ENCODE measurements at regions of chr7 and their contacts with region 1.

Region 1: DNA sequence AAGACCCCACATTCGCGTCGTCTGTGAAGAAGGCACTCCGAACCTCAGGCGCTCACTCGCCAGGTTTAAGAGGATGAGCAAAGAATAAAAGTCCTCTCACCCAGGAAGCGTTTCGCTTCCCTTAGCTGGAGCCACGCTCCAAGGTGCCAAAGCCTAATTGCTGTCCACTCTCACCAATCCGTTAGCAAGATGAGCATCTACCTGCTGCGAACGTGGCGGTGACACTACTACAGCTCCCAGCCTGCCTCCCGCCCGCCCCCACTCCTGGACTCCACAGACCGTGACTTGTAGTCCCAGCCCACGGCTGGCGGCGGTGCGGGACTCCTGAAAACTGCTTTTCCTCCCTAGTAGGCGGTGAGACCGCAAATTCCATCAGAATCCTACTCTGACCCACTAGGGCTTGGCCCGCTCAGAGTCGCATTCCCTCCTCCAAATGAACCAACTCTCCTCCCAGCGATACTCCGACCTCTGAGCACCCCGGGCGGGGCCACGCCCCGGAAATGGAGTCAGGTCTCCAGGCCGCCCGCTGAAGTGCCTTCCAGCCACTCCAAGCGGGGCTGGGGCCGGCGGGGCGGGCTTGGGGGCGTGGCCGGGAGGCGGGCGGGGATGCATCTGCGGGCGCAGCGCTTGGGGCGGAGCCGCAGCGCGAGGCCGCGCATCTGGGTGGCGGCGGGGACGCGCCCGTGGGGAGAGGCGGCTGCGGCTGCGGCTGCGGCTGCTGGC is 521 bp upstream of the PTPN12 start:
- DNase-seq: peak; percentile 98 to 99 (median 99)
- ATAC-seq: peak; percentile 92 to 97 (median 94)
- H3K4me3 ChIP-seq: peak overlapping the region; percentile 75 to 100 (median 97)
- H3K27ac ChIP-seq: peak overlapping the region; percentile 98 to 100 (median 98)
- H3K4me1 ChIP-seq: peaks cover 5 to 36% (median 24%) of the 10 kb centered on the region in 12 donors
- H3K27me3 ChIP-seq: no peaks in the 10 kb centered on the region
- CTCF ChIP-seq: no peak
- POLR2A ChIP-seq: peak; percentile 96 to 99

Region 2: GRCh38 chr7:77415823-77416622 is 120.6 kb before region 1 on chr7 and contains the start of gene GSAP:
- intact Hi-C with region 1: loop called in 5 of 10 experiments (anchors 5 to 10 kb)
- DNase-seq: peak; percentile 62 to 85 (median 75)
- ATAC-seq: peak; percentile 39 to 88 (median 82)
- H3K4me3 ChIP-seq: peak within 1 kb of the TSS; percentile 77 to 97 (median 88)
- H3K27ac ChIP-seq: peak within 1 kb of the TSS; percentile 63 to 92 (median 86)
- H3K4me1 ChIP-seq: peaks cover 0 to 55% (median 8%) of the 10 kb centered on the region in 12 donors
- H3K27me3 ChIP-seq: no peaks in the 10 kb centered on the region
- CTCF ChIP-seq: peak in 6 of 12 donors; percentile 8 to 33 (median 19)
- POLR2A ChIP-seq: no peak
- total RNA-seq, gene GSAP: 4.9 to 24.9 (median 6.5) TPM

Region 3: GRCh38 chr7:77439572-77439971 is 97.0 kb before region 1 on chr7:
- intact Hi-C with region 1: no loop called
- DNase-seq: peak in 4 of 5 donors; percentile 36 to 58 (median 52)
- ATAC-seq: peak; percentile 64 to 93 (median 90)
- H3K4me3 ChIP-seq: no peak overlapping the region
- H3K27ac ChIP-seq: no peak overlapping the region
- H3K4me1 ChIP-seq: peaks cover 0 to 16% (median 0%) of the 10 kb centered on the region in 12 donors
- H3K27me3 ChIP-seq: no peaks in the 10 kb centered on the region
- CTCF ChIP-seq: peak; percentile 20 to 64 (median 46)
- POLR2A ChIP-seq: no peak

Region 4: DNA sequence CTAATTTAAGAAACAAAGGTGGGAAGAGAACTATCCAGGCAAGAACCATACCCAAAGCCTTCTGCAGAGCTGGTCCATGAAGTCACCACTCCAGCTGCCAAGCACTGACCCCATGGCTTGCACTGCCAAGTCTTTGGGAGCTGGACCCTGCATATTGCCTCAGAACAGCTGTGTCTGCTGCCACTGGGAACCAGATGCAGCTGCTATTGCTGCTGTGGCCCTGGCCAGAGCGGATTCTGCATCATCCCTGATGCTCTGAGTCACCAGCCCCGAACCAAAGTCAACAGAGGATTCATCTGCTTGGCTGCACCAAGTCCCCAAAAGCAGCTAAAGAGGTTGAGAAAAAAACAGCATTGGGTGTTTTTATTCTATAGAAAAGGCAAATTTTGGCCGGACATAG is 81.2 kb before region 1 on chr7:
- intact Hi-C with region 1: loop called in 1 of 10 experiments (anchors 10 kb)
- DNase-seq: peak in 4 of 5 donors; percentile 35 to 84 (median 73)
- ATAC-seq: peak; percentile 60 to 96 (median 82)
- H3K4me3 ChIP-seq: no peak overlapping the region
- H3K27ac ChIP-seq: no peak overlapping the region
- H3K4me1 ChIP-seq: peaks cover 0 to 53% (median 9%) of the 10 kb centered on the region in 12 donors
- H3K27me3 ChIP-seq: no peaks in the 10 kb centered on the region
- CTCF ChIP-seq: no peak
- POLR2A ChIP-seq: no peak

Region 5: DNA sequence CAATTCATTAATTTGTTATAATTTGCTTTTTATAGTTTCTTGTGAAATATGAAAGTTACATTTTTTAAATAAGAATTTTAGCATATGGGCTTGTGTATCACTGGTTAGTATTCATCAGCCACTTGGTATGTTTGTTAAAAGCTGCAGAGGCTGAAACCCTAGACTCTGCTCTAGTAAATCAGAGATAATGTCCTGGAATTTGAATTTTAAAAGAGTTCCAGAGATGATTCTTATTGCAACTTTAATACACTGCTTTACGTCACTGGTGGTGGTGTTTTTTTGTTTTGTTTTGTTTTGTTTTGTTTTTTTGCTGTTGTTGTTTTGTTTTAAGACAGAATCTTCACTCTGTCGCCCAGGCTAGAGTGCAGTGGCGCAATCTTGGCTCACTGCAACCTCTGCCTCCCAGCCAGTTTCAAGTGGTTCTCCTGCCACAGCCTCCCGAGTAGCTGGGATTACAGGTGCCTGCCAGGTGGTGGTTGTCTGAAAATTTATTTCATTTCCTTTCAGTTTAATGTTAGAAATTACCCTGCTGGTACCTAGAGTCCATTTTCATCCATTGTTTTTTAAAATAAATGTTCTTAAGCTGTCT is 44.3 kb after region 1 on chr7:
- intact Hi-C with region 1: loop called in 4 of 10 experiments (anchors 5 to 10 kb)
- DNase-seq: no peak
- ATAC-seq: no peak
- H3K4me3 ChIP-seq: no peak overlapping the region
- H3K27ac ChIP-seq: no peak overlapping the region
- H3K4me1 ChIP-seq: peaks cover 0 to 25% (median 5%) of the 10 kb centered on the region in 12 donors
- H3K27me3 ChIP-seq: no peaks in the 10 kb centered on the region
- CTCF ChIP-seq: no peak
- POLR2A ChIP-seq: no peak

Region 6: GRCh38 chr7:77627309-77627676 is 90.7 kb after region 1 on chr7:
- intact Hi-C with region 1: loop called in 1 of 10 experiments (anchors 10 kb)
- DNase-seq: no peak
- ATAC-seq: no peak
- H3K4me3 ChIP-seq: no peak overlapping the region
- H3K27ac ChIP-seq: no peak overlapping the region
- H3K4me1 ChIP-seq: no peaks in the 10 kb centered on the region
- H3K27me3 ChIP-seq: no peaks in the 10 kb centered on the region
- CTCF ChIP-seq: no peak
- POLR2A ChIP-seq: no peak

Measured in heart left ventricle (tissue), 16 donors.